ENCODE measurements at regions of chr1 and their contacts with region 1.

Region 1: DNA sequence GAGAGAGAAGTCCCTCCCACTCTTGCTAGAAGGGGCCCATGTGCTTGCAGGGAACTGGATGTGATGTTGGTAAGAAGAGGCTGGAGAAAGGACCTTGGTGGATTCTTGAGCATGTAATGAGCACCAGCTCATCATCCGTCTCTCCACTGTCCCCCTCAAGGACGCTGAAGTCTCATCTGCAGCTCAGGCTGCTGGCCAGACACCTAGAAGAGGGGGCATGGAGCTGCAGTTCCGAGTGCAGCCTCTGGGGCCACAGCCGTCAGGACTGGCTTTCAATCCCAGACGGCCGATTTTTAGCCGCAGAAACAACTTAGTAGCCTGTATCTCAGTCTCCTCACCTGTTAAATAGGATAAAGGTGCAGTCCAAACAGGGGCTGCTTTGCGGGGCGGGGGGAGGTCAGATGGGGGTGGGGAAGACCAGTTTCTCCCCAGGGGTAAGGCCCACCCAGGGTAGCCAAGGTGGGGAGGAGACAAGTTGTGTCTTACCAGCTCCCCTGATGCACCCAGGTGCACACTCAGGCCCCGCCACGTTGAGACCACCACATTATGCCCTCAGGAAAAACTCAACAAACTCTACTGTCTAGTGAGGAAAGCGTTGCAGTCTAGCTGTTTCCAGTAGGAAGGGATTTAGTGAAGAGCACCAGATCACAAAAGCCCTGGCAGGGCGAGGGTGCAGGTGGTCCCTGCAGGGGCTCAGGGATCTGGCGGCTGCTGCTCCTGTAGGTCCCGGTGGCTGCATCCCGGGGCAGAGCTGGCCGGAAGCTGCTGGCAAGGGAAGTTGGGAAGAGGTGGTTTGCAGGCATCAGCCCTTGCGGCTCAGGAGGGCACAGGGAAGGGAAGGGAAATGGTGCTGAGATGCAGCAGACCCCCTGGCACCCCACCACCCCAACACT is 29.5 kb downstream of the LDLRAP1 start:
- DNase-seq: no peak
- H3K4me3 ChIP-seq: no peak overlapping the region
- H3K27me3 ChIP-seq: no peaks in the 10 kb centered on the region; the same call in 1 of the 2 replicates
- CTCF ChIP-seq: peak; percentile 78

Region 2: GRCh38 chr1:25549273-25550154 is 23.4 kb before region 1 on chr1:
- CTCF ChIA-PET with region 1: interaction called, 17 read pairs
- POLR2A ChIA-PET with region 1: no interaction called
- DNase-seq: no peak
- H3K4me3 ChIP-seq: no peak overlapping the region
- H3K27me3 ChIP-seq: no peaks in the 10 kb centered on the region
- CTCF ChIP-seq: no peak

Region 3: DNA sequence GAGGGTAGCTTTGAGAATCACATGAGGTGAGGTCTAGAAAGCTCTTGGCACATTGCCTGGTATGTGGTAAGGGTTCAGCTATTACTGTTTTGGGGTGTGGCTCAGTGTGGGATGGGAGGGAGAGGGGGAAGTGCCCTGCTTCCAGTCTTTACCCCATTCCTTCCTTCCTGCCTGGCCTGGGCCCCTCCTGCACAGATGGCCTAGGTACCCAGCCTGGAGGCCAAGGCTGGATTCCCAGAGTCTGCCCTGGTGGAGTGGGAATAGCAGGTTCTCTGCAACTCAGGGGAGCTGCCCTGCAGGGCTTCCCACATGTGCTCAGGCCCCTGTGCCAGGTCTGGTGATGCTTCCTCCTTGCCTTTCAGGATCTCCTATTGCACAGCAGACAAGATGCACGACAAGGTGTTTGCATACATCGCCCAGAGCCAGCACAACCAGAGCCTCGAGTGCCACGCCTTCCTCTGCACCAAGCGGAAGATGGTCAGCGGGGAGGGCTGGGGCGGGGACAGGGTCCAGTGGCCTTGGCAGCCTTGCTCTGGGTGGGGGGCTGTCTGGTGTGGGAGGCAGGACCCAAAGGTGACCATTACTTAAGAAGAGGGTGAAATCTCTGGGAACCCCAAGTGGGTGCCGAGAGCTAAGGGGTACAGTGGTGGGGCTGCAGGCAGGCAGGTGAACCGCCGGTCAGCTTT is 16.0 kb before region 1 on chr1:
- CTCF ChIA-PET with region 1: interaction called, 12 read pairs
- POLR2A ChIA-PET with region 1: no interaction called
- DNase-seq: no peak
- H3K4me3 ChIP-seq: no peak overlapping the region
- H3K27me3 ChIP-seq: no peaks in the 10 kb centered on the region
- CTCF ChIP-seq: no peak

Region 4: DNA sequence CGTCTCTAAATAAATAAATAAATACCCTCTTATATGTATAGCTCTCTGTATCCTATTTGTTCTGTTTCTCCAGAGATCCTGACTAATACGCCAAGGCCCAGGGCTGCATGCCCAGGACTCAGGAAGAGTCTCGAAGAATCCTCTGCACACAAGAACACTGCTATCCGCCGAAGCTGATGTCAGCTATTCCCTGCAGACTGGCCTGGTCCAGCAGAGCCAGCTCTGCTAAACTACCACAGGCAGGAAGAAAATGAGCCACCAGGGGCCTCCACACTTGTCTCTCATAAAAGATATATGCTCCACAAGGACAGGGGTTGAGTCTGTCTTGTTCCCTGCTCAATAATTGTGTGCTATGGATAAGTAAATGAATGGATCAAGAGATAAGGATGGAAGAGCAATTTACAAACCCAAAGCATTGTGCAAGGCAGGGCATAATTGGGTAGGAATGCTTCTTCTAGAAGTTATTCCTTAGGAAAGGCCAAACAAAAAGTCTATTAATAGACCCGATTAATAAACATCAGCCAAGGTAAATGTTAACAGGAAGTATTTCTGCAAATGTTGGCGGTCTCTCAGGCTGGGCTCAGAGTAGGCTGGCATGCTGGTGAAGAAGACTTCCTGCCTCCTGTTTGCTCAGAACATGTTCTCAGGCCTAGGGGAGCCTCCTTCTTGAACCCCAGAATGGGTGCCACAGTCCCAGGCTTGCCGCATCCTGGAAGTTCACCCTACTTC is 17.3 kb after region 1 on chr1:
- CTCF ChIA-PET with region 1: interaction called, 11 read pairs
- POLR2A ChIA-PET with region 1: no interaction called
- DNase-seq: no peak
- H3K4me3 ChIP-seq: no peak overlapping the region
- H3K27me3 ChIP-seq: no peaks in the 10 kb centered on the region; the same call in 1 of the 2 replicates
- CTCF ChIP-seq: peak; percentile 24; the same call in 1 of the 2 replicates

Region 5: GRCh38 chr1:25796811-25797458 is 224.0 kb after region 1 on chr1:
- CTCF ChIA-PET with region 1: interaction called, 11 read pairs
- POLR2A ChIA-PET with region 1: interaction called, 3 read pairs
- DNase-seq: no peak
- H3K4me3 ChIP-seq: no peak overlapping the region
- H3K27me3 ChIP-seq: peaks cover 2% of the 10 kb centered on the region
- CTCF ChIP-seq: peak; percentile 89

Measured in BJ (cell line).